Activated T-helper 2 cell treated with anti-CD3 and anti-CD28 coated beads, Interferon-gamma antibody, Interleukin-2, Interleukin-4, amounts not matched to agents 10 μg/mL and 5 μg/mL and 100 μg/mL, durations not matched to agents 14 hours and 24 hours and 36 hours (primary cell): ENCODE measurements at regions of chr7 and their contacts with region 1.

Region 1: DNA sequence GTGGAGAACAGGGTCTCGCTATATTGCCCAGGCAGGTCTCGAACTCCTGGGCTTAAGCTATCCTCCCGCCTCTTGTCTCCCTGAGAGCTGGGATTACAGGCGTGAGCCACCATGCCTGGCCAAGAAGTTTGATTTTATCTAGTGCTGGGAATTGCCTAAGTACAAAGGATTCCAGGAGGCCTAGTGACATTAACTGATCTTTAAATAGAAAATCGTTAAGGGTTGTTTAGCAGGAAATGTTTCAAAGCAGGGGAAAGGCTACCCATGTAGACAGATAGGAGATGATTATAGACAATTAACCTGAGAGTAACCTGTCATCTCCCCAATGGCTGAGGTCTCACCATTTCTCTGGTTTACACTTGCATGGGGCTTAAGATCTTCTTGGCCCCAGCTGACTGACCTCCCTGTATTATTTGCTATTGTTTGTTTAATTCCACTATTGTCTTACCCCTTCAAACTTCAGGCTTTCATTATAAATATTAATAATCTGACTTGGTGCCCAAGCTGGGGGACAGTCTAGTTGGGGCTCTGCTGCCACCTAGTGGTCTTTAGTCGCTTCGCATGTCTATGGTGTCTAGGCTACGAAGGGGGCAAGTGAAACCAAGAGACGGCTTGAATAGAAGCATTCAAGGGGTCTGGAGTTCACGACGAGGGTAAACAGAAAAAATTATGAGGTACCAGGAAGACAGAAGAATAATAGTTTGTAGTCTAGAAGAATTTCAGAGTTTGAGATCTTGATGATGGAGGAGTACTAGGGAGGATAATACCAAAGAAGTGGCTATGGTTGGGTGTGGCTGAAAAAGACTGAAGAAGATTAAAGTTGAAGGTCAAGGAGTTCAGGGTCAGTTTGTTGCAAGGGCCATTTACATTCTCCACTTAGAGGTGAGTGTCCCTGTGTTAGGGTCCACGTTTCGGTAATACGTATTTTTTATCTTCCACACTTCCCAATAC is 40.4 kb upstream of the BPGM start:
- DNase-seq: peak; percentile 40
- H3K4me3 Mint-ChIP-seq: peak overlapping the region; percentile 58
- H3K27ac Mint-ChIP-seq: no peak overlapping the region
- H3K4me1 Mint-ChIP-seq: peaks cover 4% of the 10 kb centered on the region
- H3K27me3 Mint-ChIP-seq: peaks cover 37% of the 10 kb centered on the region

Region 2: GRCh38 chr7:134514663-134515062 is 91.6 kb before region 1 on chr7:
- intact Hi-C with region 1: loop called (anchors 2 kb)
- DNase-seq: no peak
- H3K4me3 Mint-ChIP-seq: no peak overlapping the region
- H3K27ac Mint-ChIP-seq: no peak overlapping the region
- H3K4me1 Mint-ChIP-seq: peaks cover 7% of the 10 kb centered on the region
- H3K27me3 Mint-ChIP-seq: peaks cover 8% of the 10 kb centered on the region

Region 3: GRCh38 chr7:134547397-134548054 is 58.7 kb before region 1 on chr7:
- intact Hi-C with region 1: loop called (anchors 5 kb)
- DNase-seq: peak; percentile 35
- H3K4me3 Mint-ChIP-seq: no peak overlapping the region
- H3K27ac Mint-ChIP-seq: no peak overlapping the region
- H3K4me1 Mint-ChIP-seq: peaks cover 6% of the 10 kb centered on the region
- H3K27me3 Mint-ChIP-seq: peaks cover 24% of the 10 kb centered on the region

Region 4: DNA sequence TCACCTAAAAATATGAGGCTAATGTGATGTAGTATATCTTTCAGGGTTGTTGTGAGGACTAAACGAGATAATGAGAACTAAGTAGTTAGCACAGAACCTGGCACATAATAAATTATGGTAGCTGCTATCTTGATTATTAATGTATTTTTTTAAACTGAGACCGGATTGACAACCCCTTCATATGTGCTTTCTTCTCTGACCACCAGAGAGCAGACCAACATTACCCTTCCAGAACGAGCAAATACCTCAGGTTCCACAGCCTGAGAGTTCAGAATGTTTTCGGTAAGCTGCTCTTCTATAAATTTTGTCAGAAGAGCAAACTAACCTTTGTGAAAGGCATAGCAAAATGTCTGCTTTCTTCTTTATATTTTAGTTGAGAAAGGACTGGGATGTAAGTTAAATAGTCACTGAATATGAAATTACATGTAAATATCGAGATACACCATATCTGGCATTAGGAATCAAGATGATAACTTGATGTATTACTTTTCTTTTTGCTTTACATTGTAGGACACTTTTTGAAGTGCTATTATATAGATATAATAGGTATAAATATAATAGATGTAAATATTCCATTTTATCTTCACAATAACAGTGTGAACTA is 26.8 kb after region 1 on chr7:
- intact Hi-C with region 1: no loop called
- DNase-seq: no peak
- H3K4me3 Mint-ChIP-seq: no peak overlapping the region
- H3K27ac Mint-ChIP-seq: no peak overlapping the region
- H3K4me1 Mint-ChIP-seq: peaks cover 25% of the 10 kb centered on the region
- H3K27me3 Mint-ChIP-seq: peaks cover 8% of the 10 kb centered on the region

Region 5: GRCh38 chr7:134693261-134693660 is 87.0 kb after region 1 on chr7:
- intact Hi-C with region 1: no loop called
- DNase-seq: no peak
- H3K4me3 Mint-ChIP-seq: no peak overlapping the region
- H3K27ac Mint-ChIP-seq: no peak overlapping the region
- H3K4me1 Mint-ChIP-seq: peaks cover 25% of the 10 kb centered on the region
- H3K27me3 Mint-ChIP-seq: no peaks in the 10 kb centered on the region